ENCODE measurements at regions of chr10 and their contacts with region 1.

Region 1: DNA sequence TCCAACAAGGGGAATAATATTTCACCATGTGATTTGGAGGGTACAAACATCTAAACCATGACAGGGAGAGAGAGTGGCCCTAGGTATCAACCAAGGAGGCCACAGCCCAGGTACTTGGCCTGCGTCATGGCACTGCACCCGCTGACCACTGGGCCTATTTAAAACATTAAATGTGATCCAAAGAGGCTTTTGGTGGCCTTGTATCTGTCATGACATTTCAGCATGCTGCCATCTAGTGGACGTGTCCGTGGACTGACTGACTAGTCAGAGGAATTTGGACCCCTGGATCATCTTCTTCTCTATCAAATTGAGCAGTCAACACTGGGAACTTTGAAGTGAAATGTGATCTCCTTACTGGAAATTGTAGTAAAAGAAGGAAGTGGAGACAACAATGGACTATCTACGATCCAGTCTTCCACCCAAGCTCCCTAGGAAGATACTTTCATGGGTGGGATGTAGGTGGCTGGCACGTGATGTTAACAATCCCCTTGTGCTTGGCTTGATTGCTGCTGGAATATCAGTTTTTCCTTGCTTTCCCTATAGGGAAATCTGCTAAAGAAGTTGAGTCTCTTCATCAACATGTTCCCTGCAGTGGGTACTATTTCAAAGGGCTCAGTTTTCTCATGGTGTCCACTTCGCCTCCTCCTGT is 24.6 kb upstream of the ITGA8 start:
- DNase-seq: peak in 10 of 14 experiments; percentile 1 to 35 (median 13)
- ATAC-seq: no peak
- H3K4me3 ChIP-seq: no peak overlapping the region
- H3K4me3 Mint-ChIP-seq: no peak overlapping the region
- H3K27ac ChIP-seq: no peak overlapping the region
- H3K27ac Mint-ChIP-seq: no peak overlapping the region
- H3K4me1 ChIP-seq: no peaks in the 10 kb centered on the region
- H3K4me1 Mint-ChIP-seq: no peaks in the 10 kb centered on the region
- H3K27me3 ChIP-seq: peaks cover 0 to 3% of the 10 kb centered on the region in 2 experiments
- H3K27me3 Mint-ChIP-seq: peaks cover 7% of the 10 kb centered on the region
- CTCF ChIP-seq: peak; percentile 53

Region 2: DNA sequence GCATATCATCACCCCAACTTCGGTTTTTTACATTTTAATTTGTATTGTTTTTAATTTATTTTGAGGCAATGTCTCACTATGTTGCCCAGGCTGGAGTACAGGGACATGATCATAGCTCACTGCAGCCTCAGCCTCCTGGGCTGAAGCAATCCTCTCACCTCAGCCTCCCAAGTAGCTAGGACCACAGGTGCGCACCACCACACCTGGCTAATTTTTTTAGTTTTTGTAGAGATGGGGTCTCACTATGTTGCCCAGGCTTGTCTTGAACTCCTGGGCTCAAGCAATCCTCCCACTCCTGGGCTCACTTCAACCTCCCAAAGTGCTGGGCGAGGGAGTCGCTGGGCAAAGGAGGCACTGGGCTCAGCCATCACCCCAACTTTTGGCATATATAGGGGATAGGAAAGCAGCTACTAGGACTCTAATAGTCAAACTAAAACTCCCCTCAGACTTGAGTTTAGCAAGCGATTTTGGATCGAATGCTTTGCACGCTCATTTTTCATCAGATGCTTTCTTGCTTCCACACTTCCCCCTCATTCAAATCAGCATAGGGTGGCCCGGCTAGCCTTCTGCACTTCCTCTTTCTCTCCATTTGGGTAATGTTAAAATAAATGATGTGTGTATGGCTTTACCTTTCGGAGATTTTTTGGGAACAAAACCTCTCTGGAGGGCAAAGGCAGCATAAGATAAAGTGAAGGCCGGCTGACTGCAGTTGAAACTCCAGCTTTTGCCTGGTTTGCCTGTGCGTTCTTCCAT is 555.0 kb before region 1 on chr10:
- CTCF ChIA-PET with region 1: no interaction called
- POLR2A ChIA-PET with region 1: no interaction called
- intact Hi-C with region 1: no loop called
- DNase-seq: no peak
- ATAC-seq: no peak
- H3K4me3 ChIP-seq: no peak overlapping the region
- H3K4me3 Mint-ChIP-seq: peak overlapping the region; percentile 49
- H3K27ac ChIP-seq: no peak overlapping the region
- H3K27ac Mint-ChIP-seq: peak overlapping the region; percentile 60
- H3K4me1 ChIP-seq: peaks cover 56% of the 10 kb centered on the region
- H3K4me1 Mint-ChIP-seq: peaks cover 45% of the 10 kb centered on the region
- H3K27me3 ChIP-seq: no peaks in the 10 kb centered on the region
- H3K27me3 Mint-ChIP-seq: no peaks in the 10 kb centered on the region
- CTCF ChIP-seq: no peak

Region 3: GRCh38 chr10:15427843-15428414 is 316.4 kb before region 1 on chr10:
- CTCF ChIA-PET with region 1: no interaction called
- POLR2A ChIA-PET with region 1: no interaction called
- intact Hi-C with region 1: loop called in 1 of 2 experiments (anchors 10 kb)
- DNase-seq: no peak
- ATAC-seq: no peak
- H3K4me3 ChIP-seq: no peak overlapping the region
- H3K4me3 Mint-ChIP-seq: no peak overlapping the region
- H3K27ac ChIP-seq: no peak overlapping the region
- H3K27ac Mint-ChIP-seq: no peak overlapping the region
- H3K4me1 ChIP-seq: no peaks in the 10 kb centered on the region
- H3K4me1 Mint-ChIP-seq: no peaks in the 10 kb centered on the region
- H3K27me3 ChIP-seq: peaks cover 0 to 8% of the 10 kb centered on the region in 2 experiments
- H3K27me3 Mint-ChIP-seq: peaks cover 19% of the 10 kb centered on the region
- CTCF ChIP-seq: peak; percentile 21

Region 4: GRCh38 chr10:16440396-16441133 is 696.2 kb after region 1 on chr10:
- CTCF ChIA-PET with region 1: no interaction called
- POLR2A ChIA-PET with region 1: no interaction called
- intact Hi-C with region 1: no loop called
- DNase-seq: peak in 2 of 14 experiments; percentile 17 to 31
- ATAC-seq: no peak
- H3K4me3 ChIP-seq: no peak overlapping the region
- H3K4me3 Mint-ChIP-seq: peak overlapping the region; percentile 36
- H3K27ac ChIP-seq: no peak overlapping the region
- H3K27ac Mint-ChIP-seq: peak overlapping the region; percentile 14
- H3K4me1 ChIP-seq: peaks cover 47% of the 10 kb centered on the region
- H3K4me1 Mint-ChIP-seq: peaks cover 60% of the 10 kb centered on the region
- H3K27me3 ChIP-seq: no peaks in the 10 kb centered on the region
- H3K27me3 Mint-ChIP-seq: no peaks in the 10 kb centered on the region
- CTCF ChIP-seq: no peak

Measured in CD4-positive, alpha-beta T cell (primary cell).